ENCODE measurements at regions of chr14 and their contacts with region 1.

Region 1: GRCh38 chr14:77616454-77617229 is at the start of gene SPTLC2:
- DNase-seq: peak; percentile 91 to 99 (median 94)
- ATAC-seq: peak; percentile 97
- H3K4me3 ChIP-seq: peak within 1 kb of the TSS; percentile 65
- H3K4me3 Mint-ChIP-seq: peak within 1 kb of the TSS; percentile 97
- H3K27ac ChIP-seq: peak within 1 kb of the TSS; percentile 19 to 56
- H3K27ac Mint-ChIP-seq: peak within 1 kb of the TSS; percentile 78
- H3K4me1 ChIP-seq: peaks cover 15% of the 10 kb centered on the region
- H3K4me1 Mint-ChIP-seq: peaks cover 48% of the 10 kb centered on the region
- H3K27me3 ChIP-seq: no peaks in the 10 kb centered on the region
- H3K27me3 Mint-ChIP-seq: no peaks in the 10 kb centered on the region
- CTCF ChIP-seq: no peak
- total RNA-seq, gene SPTLC2: 13.0 to 14.5 TPM

Region 2: GRCh38 chr14:76812211-76813044 is 804.2 kb before region 1 on chr14 and contains the start of gene ANGEL1:
- CTCF ChIA-PET with region 1: no interaction called
- POLR2A ChIA-PET with region 1: no interaction called
- intact Hi-C with region 1: loop called in 1 of 2 experiments (anchors 10 kb)
- DNase-seq: peak; percentile 94 to 99 (median 98)
- ATAC-seq: peak; percentile 90
- H3K4me3 ChIP-seq: peak within 1 kb of the TSS; percentile 84
- H3K4me3 Mint-ChIP-seq: peak within 1 kb of the TSS; percentile 97
- H3K27ac ChIP-seq: peak within 1 kb of the TSS; percentile 67 to 85
- H3K27ac Mint-ChIP-seq: peak within 1 kb of the TSS; percentile 96
- H3K4me1 ChIP-seq: peaks cover 28% of the 10 kb centered on the region
- H3K4me1 Mint-ChIP-seq: peaks cover 35% of the 10 kb centered on the region
- H3K27me3 ChIP-seq: no peaks in the 10 kb centered on the region
- H3K27me3 Mint-ChIP-seq: no peaks in the 10 kb centered on the region
- CTCF ChIP-seq: no peak
- total RNA-seq, gene ANGEL1: 10.1 to 10.4 TPM

Region 3: GRCh38 chr14:77376771-77377501 is 239.7 kb before region 1 on chr14 and contains the starts of genes SAMD15 and TMED8:
- CTCF ChIA-PET with region 1: no interaction called
- POLR2A ChIA-PET with region 1: no interaction called
- intact Hi-C with region 1: loop called in 1 of 2 experiments (anchors 5 kb)
- DNase-seq: peak; percentile 61 to 93 (median 79)
- ATAC-seq: peak; percentile 96
- H3K4me3 ChIP-seq: peak within 1 kb of the TSS; percentile 78
- H3K4me3 Mint-ChIP-seq: peak within 1 kb of the TSS; percentile 95
- H3K27ac ChIP-seq: peak within 1 kb of the TSS; percentile 67 to 89
- H3K27ac Mint-ChIP-seq: peak within 1 kb of the TSS; percentile 74
- H3K4me1 ChIP-seq: peaks cover 21% of the 10 kb centered on the region
- H3K4me1 Mint-ChIP-seq: peaks cover 41% of the 10 kb centered on the region
- H3K27me3 ChIP-seq: no peaks in the 10 kb centered on the region
- H3K27me3 Mint-ChIP-seq: no peaks in the 10 kb centered on the region
- CTCF ChIP-seq: no peak
- total RNA-seq, gene SAMD15: 0.34 TPM in 1 of 2 experiments, not detected in the other
- total RNA-seq, gene TMED8: 4.9 to 5.1 TPM

Region 4: DNA sequence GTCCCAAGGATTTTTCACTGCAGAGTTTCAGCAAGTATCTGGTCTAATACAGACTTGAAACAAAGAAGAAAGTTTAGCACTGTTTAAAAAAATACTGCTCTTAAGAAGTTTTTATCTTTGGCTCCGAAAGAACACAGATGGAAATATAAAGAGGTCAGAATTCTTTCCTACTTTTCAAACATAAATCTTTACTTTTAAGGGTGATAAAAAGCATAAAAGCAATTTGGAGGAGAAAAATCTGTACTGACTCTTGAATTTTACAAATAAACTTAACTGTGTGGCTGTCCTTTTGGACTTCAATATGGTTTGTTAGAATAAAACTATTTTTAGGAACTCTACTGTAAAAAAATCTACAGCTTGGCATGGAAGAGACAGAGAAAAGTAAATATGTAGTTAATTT is 90.4 kb before region 1 on chr14:
- CTCF ChIA-PET with region 1: no interaction called
- POLR2A ChIA-PET with region 1: no interaction called
- intact Hi-C with region 1: no loop called
- DNase-seq: no peak
- ATAC-seq: no peak
- H3K4me3 ChIP-seq: no peak overlapping the region
- H3K4me3 Mint-ChIP-seq: no peak overlapping the region
- H3K27ac ChIP-seq: no peak overlapping the region
- H3K27ac Mint-ChIP-seq: no peak overlapping the region
- H3K4me1 ChIP-seq: no peaks in the 10 kb centered on the region
- H3K4me1 Mint-ChIP-seq: no peaks in the 10 kb centered on the region
- H3K27me3 ChIP-seq: no peaks in the 10 kb centered on the region
- H3K27me3 Mint-ChIP-seq: no peaks in the 10 kb centered on the region
- CTCF ChIP-seq: no peak

Region 5: DNA sequence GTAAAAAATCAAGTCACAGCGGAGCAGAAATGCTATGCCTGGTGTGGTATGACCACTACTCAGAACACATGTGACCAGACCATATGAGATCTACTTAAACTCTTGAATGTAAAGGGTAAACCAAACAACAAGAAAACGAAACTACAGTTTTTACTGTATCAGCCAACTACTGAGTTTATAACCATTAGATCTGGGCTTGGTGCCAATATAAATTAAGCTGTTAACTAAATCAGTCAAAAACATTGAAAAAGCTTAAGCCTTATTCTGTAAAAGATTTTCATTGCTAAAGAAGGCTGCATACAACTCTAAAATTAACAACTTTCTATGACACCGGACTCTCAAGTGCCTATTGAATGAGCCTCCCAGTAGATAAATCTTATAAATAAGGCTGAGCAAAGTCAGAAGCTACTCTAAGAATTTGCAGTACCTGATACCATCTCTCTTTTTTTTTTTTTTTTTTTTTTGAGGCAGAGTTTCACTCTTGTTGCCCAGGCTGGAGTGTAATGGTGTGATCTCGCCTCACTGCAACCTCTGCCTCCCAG is 35.6 kb before region 1 on chr14:
- CTCF ChIA-PET with region 1: no interaction called
- POLR2A ChIA-PET with region 1: interaction called, 4 read pairs
- intact Hi-C with region 1: loop called (anchors 5 kb)
- DNase-seq: peak in 3 of 14 experiments; percentile 53 to 64 (median 56)
- ATAC-seq: peak; percentile 82
- H3K4me3 ChIP-seq: peak overlapping the region; percentile 17
- H3K4me3 Mint-ChIP-seq: peak overlapping the region; percentile 80
- H3K27ac ChIP-seq: peak overlapping the region in 1 of 2 donors; percentile 8
- H3K27ac Mint-ChIP-seq: peak overlapping the region; percentile 79
- H3K4me1 ChIP-seq: peaks cover 9% of the 10 kb centered on the region
- H3K4me1 Mint-ChIP-seq: peaks cover 35% of the 10 kb centered on the region
- H3K27me3 ChIP-seq: no peaks in the 10 kb centered on the region
- H3K27me3 Mint-ChIP-seq: no peaks in the 10 kb centered on the region
- CTCF ChIP-seq: no peak

Region 6: DNA sequence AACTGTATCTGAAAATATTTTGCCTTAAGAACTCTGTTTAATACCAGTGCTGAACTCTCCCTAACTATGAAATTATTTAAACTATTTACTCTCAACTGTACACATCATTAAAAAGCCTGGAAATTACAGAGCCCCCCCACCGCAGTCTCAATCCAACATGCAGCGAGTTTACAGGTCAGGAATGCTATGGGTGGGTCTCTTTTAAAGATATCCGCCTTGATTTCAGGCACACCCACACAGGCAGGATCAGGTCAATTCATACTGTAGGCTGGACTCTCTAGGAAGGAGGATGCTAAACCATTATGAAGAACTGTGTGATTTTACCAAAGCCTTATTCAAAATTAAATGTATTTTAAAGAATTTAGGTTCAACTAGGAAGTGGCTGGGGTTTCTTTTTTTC is 16.7 kb before region 1 on chr14:
- CTCF ChIA-PET with region 1: interaction called, 6 read pairs
- POLR2A ChIA-PET with region 1: no interaction called
- intact Hi-C with region 1: loop called in 1 of 2 experiments (anchors 2 kb)
- DNase-seq: no peak
- ATAC-seq: no peak
- H3K4me3 ChIP-seq: no peak overlapping the region
- H3K4me3 Mint-ChIP-seq: peak overlapping the region; percentile 48
- H3K27ac ChIP-seq: peak overlapping the region in 1 of 2 donors; percentile 27
- H3K27ac Mint-ChIP-seq: peak overlapping the region; percentile 88
- H3K4me1 ChIP-seq: peaks cover 14% of the 10 kb centered on the region
- H3K4me1 Mint-ChIP-seq: peaks cover 58% of the 10 kb centered on the region
- H3K27me3 ChIP-seq: no peaks in the 10 kb centered on the region
- H3K27me3 Mint-ChIP-seq: no peaks in the 10 kb centered on the region
- CTCF ChIP-seq: no peak

Region 7: DNA sequence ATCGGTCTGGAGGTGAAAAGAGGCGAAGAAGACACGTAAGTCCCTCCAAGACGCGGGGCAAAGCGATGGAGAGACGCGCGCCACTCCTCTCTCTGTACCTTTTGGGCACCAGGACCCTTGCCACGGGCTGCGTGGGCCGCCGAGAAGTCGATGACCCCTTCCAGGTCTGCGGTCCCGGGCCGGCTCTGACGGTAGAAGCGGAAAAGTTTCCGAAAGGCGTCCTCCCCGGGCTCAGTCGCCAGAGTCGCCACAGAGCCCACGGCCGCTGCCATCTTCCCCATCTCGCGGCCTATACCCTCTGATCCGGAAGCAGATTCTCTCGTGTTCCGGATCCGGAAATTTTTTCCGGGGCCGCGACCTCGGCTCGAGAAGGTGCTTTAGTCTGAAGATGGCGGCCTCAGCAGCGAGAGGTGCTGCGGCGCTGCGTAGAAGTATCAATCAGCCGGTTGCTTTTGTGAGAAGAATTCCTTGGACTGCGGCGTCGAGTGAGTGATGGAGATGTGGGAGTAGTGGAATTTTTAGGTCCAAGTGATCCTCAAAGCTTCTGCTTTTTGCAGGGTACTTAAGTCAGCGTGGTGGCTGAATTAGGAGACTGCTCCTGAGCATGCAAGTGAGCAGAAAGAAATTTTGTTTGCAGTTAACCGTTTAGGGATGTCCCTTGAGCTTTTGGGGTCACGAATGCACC is 91.2 kb after region 1 on chr14 and contains the starts of genes ALKBH1 and SLIRP:
- CTCF ChIA-PET with region 1: no interaction called
- POLR2A ChIA-PET with region 1: no interaction called
- intact Hi-C with region 1: loop called in 1 of 2 experiments (anchors 5 kb)
- DNase-seq: peak; percentile 79 to 93 (median 84)
- ATAC-seq: peak; percentile 98
- H3K4me3 ChIP-seq: peak within 1 kb of the TSS; percentile 82
- H3K4me3 Mint-ChIP-seq: peak within 1 kb of the TSS; percentile 95
- H3K27ac ChIP-seq: peak within 1 kb of the TSS; percentile 10 to 65
- H3K27ac Mint-ChIP-seq: peak within 1 kb of the TSS; percentile 87
- H3K4me1 ChIP-seq: peaks cover 19% of the 10 kb centered on the region
- H3K4me1 Mint-ChIP-seq: peaks cover 54% of the 10 kb centered on the region
- H3K27me3 ChIP-seq: no peaks in the 10 kb centered on the region
- H3K27me3 Mint-ChIP-seq: no peaks in the 10 kb centered on the region
- CTCF ChIP-seq: no peak
- total RNA-seq, gene ALKBH1: 5.6 to 8.5 TPM
- total RNA-seq, gene SLIRP: 46.8 to 49.7 TPM

Region 8: GRCh38 chr14:77832297-77832696 is 215.7 kb after region 1 on chr14:
- CTCF ChIA-PET with region 1: no interaction called
- POLR2A ChIA-PET with region 1: no interaction called
- intact Hi-C with region 1: no loop called
- DNase-seq: no peak
- ATAC-seq: no peak
- H3K4me3 ChIP-seq: no peak overlapping the region
- H3K4me3 Mint-ChIP-seq: no peak overlapping the region
- H3K27ac ChIP-seq: no peak overlapping the region
- H3K27ac Mint-ChIP-seq: no peak overlapping the region
- H3K4me1 ChIP-seq: no peaks in the 10 kb centered on the region
- H3K4me1 Mint-ChIP-seq: no peaks in the 10 kb centered on the region
- H3K27me3 ChIP-seq: no peaks in the 10 kb centered on the region
- H3K27me3 Mint-ChIP-seq: no peaks in the 10 kb centered on the region
- CTCF ChIP-seq: no peak